Activated naive CD4-positive, alpha-beta T cell treated with anti-CD3 and anti-CD28 coated beads for 36 hours (primary cell): ENCODE measurements at regions of chr19 and their contacts with region 1.

Region 1: DNA sequence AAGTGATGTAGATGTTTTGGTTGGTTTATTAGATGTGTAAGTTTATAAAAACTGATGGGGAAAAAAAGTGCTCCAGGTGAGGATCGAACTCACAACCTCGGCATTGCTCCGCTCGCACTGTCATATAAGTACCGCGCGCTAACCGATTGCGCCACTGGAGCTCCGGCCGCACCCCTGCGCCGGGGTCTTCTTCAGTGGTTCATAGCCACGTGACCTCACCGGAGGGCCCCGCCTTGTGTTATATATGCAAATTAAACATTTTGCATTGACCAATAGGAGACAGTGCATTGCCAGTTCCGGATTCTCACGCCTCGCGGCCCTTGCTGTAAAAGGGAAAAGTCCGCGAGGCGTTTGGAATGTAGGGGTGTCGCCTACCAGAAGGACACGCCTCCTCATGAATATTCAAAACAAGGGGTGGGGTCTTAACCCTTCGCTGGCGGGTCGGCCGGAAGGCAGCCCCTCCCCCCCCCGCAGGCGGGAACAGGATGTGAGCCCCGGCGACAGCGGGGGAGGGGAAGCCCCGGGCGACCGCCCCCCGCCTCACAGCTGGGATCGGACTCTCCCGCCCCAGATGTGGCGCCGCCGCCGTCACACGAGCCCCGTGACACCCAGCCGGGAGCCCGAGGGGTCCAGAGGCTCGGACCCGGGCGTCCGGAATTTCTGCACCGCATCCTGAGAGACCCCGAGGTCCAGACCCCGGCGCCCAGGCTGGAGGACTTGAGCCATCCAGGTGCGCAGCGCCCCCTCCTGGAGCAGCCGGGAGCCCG is at the start of gene PLEKHG2:
- DNase-seq: peak; percentile 98
- H3K4me3 Mint-ChIP-seq: peak within 1 kb of the TSS; percentile 85
- H3K27ac Mint-ChIP-seq: peak within 1 kb of the TSS; percentile 85
- H3K4me1 Mint-ChIP-seq: peaks cover 34% of the 10 kb centered on the region
- H3K27me3 Mint-ChIP-seq: peaks cover 2% of the 10 kb centered on the region
- total RNA-seq, gene PLEKHG2: 27.3 to 34.6 TPM

Region 2: DNA sequence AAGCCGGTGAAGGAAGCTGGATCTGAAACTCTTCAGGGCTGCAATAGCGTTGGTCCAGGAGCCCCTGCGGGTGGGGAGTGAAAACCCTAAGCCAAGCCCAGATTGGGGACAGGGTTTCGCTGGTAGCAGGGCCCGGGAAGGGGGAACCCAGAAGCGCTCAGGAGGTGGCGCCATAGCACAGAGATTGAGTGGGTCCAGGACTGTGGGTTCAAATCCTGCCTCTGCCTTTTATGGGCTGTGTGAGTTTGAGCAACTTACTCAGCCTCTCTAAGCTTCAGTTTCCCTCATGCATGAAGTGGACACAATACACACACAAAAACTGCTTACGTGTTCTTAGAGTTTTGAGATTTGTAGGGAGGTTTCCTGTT is 199.9 kb before region 1 on chr19:
- CTCF ChIA-PET with region 1: no interaction called
- intact Hi-C with region 1: loop called (anchors 1 kb)
- DNase-seq: peak; percentile 84
- H3K4me3 Mint-ChIP-seq: no peak overlapping the region
- H3K27ac Mint-ChIP-seq: no peak overlapping the region
- H3K4me1 Mint-ChIP-seq: no peaks in the 10 kb centered on the region
- H3K27me3 Mint-ChIP-seq: peaks cover 2% of the 10 kb centered on the region

Region 3: DNA sequence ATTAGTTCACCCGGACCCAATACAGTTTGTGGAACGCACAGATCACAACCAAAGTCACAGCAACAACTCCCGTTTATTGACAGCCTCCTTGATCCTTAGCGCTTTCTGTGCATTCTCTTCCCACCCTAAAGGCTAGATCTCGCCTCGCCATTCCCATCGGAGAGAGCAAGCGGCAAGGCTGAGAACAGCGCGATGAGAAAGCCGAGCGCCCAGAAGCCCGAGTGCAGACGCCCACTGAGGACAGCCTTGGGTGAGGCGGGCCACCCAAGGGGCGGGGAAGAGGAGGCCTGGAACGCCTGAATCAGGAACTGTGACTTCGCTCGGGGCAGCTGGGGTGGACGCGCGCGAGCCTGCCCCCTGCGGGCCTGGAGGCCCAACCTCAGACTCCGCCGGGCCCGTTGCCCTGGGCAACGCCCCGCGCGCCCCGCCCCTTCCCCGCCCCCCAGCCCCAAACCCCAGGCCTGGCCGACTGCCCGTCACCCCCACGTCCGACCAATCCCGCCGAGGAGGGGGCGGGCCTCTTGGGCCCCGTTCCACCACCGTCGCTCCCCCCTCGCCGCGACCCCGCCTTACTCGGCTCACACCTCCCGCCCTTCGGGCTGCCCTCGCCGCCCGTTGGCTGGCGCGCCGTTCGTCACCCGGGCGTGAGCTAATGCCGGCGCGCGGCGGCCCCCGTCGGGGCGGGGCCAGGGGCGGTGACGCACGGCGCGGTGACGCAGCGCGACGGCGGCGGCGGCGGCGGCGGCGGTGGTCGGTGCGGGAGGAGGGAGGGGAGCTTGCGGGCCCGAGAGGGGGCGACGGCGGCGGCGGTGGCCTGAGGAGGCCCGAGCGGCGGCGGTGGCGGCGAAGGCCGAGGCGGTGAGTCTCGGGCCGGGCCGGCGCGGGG is 70.3 kb before region 1 on chr19 and contains the start of gene SAMD4B:
- CTCF ChIA-PET with region 1: interaction called, 7 read pairs
- intact Hi-C with region 1: loop called (anchors 1 kb)
- DNase-seq: peak; percentile 99
- H3K4me3 Mint-ChIP-seq: peak within 1 kb of the TSS; percentile 91
- H3K27ac Mint-ChIP-seq: peak within 1 kb of the TSS; percentile 91
- H3K4me1 Mint-ChIP-seq: peaks cover 65% of the 10 kb centered on the region
- H3K27me3 Mint-ChIP-seq: no peaks in the 10 kb centered on the region
- total RNA-seq, gene SAMD4B: 33.0 to 35.8 TPM

Region 4: DNA sequence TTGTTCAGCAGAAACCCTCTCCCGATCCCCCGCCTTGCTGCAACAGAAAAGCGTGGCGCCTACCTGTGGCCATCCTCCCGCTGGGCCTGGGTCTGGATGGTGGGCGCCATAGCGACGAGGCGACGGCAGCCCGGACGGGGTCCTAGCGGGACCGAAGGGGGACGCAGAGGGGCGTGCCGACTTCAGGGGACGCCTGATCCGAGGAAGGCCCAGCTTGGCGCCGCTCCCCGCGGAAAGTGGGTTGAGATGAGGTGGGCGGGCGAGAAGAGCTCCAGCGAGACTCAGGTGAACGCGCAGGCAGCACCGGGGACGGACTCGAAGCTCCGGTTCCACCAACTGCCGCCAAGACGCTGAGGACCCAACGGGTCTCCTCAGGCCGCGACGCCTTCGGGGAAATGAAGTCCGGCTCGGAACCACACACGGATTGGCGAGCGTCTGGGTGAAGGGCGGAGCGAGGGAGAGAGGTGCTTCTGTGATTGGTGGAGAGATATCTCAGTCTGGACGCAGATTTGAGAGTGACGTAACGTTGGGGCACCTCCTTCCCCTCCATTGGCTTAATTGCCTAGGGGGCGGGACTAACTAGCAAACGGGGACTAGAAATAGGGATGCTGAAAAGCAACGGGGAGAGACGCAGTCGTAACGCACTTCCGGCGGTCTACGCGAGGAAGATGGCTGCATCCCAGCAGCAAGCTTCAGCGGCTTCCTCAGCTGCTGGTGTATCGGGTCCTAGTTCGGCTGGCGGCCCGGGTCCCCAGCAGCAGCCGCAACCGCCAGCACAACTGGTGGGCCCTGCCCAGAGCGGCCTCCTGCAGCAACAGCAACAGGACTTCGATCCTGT is 21.3 kb before region 1 on chr19 and contains the starts of genes MED29 and PAF1:
- CTCF ChIA-PET with region 1: interaction called, 97 read pairs
- intact Hi-C with region 1: loop called (anchors 1 kb)
- DNase-seq: peak; percentile 98
- H3K4me3 Mint-ChIP-seq: peak within 1 kb of the TSS; percentile 98
- H3K27ac Mint-ChIP-seq: peak within 1 kb of the TSS; percentile 98
- H3K4me1 Mint-ChIP-seq: peaks cover 41% of the 10 kb centered on the region
- H3K27me3 Mint-ChIP-seq: no peaks in the 10 kb centered on the region
- total RNA-seq, gene MED29: 18.0 to 18.5 TPM
- total RNA-seq, gene PAF1: 31.9 to 34.9 TPM

Region 5: DNA sequence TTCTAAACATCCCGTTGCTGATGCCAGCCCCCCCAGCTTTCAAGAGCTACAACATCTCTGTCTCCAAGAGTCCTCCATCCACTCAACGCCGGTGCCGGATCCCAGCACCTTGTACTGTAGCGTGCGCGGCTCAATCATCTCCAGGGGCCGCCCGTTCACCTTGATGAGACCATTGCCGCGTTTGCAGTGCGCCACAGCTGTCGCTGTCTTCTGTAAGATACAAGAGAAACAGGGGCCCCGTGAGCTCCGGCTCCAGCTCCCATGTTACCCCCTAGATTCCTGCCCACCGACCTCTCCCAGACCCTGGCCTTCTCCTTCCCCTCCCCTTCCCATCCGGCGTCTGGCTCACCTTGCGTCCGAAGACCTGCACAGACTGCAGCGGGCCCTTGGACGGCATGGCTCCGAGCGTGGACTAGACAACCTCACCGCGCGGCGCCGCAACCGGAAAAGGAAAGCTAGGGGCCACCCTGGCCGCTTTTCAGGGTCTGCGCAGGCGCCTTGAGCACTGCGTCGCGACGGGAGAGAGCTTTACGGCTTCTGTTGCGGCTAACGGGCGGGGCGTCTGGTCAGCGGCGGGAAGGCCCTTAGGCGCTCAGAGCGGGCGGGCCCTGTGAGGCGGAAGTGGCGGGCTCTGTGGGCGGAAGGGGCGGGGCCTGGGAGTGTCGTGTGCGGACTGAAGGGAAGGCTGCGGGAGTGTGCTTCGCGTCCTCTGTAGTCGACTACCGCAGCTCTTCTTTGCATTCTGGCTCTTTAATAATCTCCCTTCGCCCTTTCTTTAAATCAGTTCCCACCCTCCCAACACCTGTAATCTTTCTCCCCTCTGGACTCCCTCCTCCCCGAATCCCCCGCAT is 23.4 kb after region 1 on chr19 and contains the start of gene RPS16:
- CTCF ChIA-PET with region 1: interaction called, 7 read pairs
- intact Hi-C with region 1: loop called (anchors 1 kb)
- DNase-seq: peak; percentile 99
- H3K4me3 Mint-ChIP-seq: peak within 1 kb of the TSS; percentile 99
- H3K27ac Mint-ChIP-seq: peak within 1 kb of the TSS; percentile 99
- H3K4me1 Mint-ChIP-seq: peaks cover 54% of the 10 kb centered on the region
- H3K27me3 Mint-ChIP-seq: no peaks in the 10 kb centered on the region
- total RNA-seq, gene RPS16: 4,195 to 4,327 TPM

Region 6: DNA sequence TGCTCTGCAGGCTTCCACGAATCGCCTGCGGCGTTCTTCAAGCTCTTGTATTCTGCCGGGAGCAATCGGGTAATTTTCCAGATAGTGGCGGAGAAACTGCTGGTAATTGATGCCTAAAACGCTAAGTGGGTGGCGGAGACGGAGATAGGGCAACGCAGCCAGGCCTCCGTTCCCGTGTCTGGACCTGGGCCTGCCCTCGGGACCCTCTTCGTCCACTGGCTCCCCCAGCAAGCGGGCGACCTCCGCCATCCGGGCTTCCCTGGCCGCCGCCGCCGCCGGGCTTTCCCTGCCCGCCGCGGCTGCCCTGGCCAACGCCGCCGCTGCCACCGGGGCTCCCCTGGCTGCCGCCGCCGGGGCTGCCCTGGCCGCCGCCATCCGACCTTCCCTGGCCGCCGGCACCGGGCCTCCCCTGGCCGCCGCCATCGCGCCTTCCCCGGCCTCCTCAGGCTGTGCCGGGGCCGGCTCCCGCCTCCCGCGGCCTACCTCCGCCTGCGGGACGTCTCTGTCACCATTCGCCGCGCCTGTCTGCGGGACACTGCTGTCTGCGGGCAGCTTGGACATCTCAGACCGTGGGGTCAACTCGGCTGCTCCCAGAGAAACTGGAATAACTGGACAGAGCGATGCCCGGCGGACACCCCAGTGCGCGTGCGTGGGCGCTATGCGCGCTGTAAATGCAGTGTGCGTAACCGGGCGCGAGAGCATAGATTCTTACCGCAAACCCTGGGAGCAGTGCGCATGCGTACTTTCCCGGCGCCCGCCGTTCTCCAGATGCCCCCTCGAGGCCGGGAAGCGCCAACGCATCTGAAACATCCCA is 127.4 kb after region 1 on chr19 and contains the start of gene EID2:
- CTCF ChIA-PET with region 1: no interaction called
- intact Hi-C with region 1: loop called (anchors 1 kb)
- DNase-seq: peak; percentile 97
- H3K4me3 Mint-ChIP-seq: peak within 1 kb of the TSS; percentile 93
- H3K27ac Mint-ChIP-seq: peak within 1 kb of the TSS; percentile 97
- H3K4me1 Mint-ChIP-seq: peaks cover 61% of the 10 kb centered on the region
- H3K27me3 Mint-ChIP-seq: no peaks in the 10 kb centered on the region
- total RNA-seq, gene EID2: 7.7 to 9.1 TPM